Psoas muscle (tissue), 8 donors: ENCODE measurements at regions of chr10 and their contacts with region 1.

Region 1: GRCh38 chr10:63573068-63573697 is 52.0 kb downstream of the REEP3 start:
- DNase-seq: no peak
- ATAC-seq: peak in 1 of 4 donors; percentile 43
- H3K4me3 ChIP-seq: peak overlapping the region; percentile 20
- H3K27ac ChIP-seq: peak overlapping the region; percentile 53
- H3K4me1 ChIP-seq: peaks cover 40% of the 10 kb centered on the region
- H3K27me3 ChIP-seq: no peaks in the 10 kb centered on the region
- CTCF ChIP-seq: no peak

Region 2: DNA sequence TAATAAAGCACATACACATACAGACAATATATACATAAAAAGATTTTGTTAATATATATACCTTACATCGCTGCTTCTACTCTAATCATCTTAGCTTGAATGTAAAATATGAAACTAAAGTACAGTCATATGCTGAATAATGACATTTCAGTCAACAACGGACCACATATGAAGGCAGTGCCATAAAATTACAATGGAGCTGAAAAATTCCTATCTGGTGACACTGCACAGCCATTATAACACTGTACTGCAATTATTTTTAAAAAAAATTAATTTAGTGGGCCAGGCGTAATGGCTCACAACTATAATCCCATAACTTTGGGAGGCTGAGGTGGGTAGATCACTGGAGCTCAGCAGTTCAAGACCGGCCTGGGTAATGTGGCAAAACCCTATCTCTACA is 229.7 kb before region 1 on chr10:
- intact Hi-C with region 1: no loop called
- DNase-seq: no peak
- ATAC-seq: no peak
- H3K4me3 ChIP-seq: no peak overlapping the region
- H3K27ac ChIP-seq: no peak overlapping the region
- H3K4me1 ChIP-seq: no peaks in the 10 kb centered on the region
- H3K27me3 ChIP-seq: no peaks in the 10 kb centered on the region
- CTCF ChIP-seq: no peak

Region 3: DNA sequence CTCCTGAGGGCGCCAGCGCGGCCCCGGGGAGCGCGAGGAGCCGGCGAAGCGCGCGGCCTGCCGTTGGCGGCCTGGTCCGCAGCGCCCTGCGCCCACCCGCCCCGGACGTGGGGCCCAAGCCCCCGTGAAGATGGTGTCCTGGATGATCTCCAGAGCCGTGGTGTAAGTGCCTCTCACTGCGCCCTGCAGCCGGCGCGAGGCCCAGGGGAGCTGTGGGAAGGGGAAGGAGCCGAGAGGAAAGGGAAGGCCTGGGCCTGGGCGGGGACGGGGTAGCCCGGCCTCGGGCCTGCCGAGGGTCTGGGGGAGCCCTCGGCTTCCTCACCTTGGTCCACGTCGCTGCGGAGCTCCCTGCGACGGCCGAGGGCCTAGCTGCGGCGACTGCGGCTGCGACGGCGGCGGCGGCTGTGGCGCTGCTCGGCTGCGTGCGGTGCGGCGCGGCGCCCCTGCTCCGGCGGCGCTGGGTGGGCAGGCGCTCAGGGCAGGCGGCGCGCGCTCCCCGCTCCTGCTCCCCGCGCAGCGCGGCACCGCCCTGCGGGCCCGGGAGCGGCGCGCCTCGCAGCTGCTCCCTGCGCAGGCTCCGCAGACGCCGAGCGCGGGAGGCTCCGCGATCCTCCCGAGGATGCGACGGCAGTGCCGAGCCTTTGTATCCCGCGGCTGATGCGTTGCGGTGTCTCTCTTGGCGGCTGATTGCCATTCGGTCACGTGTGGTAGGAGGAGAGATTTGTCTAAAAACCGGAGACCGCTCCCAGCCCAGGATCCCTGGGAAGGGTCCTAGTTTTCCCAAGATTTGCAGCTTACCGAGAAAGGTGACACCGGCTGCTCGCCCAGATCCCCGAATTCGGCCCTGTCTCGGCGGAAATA is 51.5 kb before region 1 on chr10:
- intact Hi-C with region 1: loop called in 1 of 2 experiments (anchors 5 kb)
- DNase-seq: peak; percentile 76 to 86
- ATAC-seq: peak; percentile 84 to 87 (median 86)
- H3K4me3 ChIP-seq: peak overlapping the region; percentile 83
- H3K27ac ChIP-seq: peak overlapping the region; percentile 98
- H3K4me1 ChIP-seq: peaks cover 53% of the 10 kb centered on the region
- H3K27me3 ChIP-seq: no peaks in the 10 kb centered on the region
- CTCF ChIP-seq: no peak

Region 4: GRCh38 chr10:63605197-63605967 is 32.2 kb after region 1 on chr10:
- intact Hi-C with region 1: loop called in 1 of 2 experiments (anchors 5 kb)
- DNase-seq: no peak
- ATAC-seq: peak in 1 of 4 donors; percentile 50
- H3K4me3 ChIP-seq: no peak overlapping the region
- H3K27ac ChIP-seq: no peak overlapping the region
- H3K4me1 ChIP-seq: peaks cover 6% of the 10 kb centered on the region
- H3K27me3 ChIP-seq: no peaks in the 10 kb centered on the region
- CTCF ChIP-seq: no peak